ENCODE measurements at regions of chr6 and their contacts with region 1.

Region 1: GRCh38 chr6:16712931-16713484 is 48.3 kb downstream of the ATXN1 start:
- DNase-seq: peak; percentile 45 to 95
- H3K4me3 ChIP-seq: peak overlapping the region; percentile 34; the same call in 1 of the 2 replicates
- H3K27ac ChIP-seq: peak overlapping the region; percentile 95
- H3K4me1 ChIP-seq: peaks cover 33% of the 10 kb centered on the region
- H3K27me3 ChIP-seq: no peaks in the 10 kb centered on the region
- CTCF ChIP-seq: peak; percentile 68

Region 2: GRCh38 chr6:16471222-16471909 is 241.6 kb before region 1 on chr6:
- CTCF ChIA-PET with region 1: no interaction called
- POLR2A ChIA-PET with region 1: no interaction called
- intact Hi-C with region 1: loop called (anchors 1 kb)
- DNase-seq: no peak
- H3K4me3 ChIP-seq: no peak overlapping the region
- H3K27ac ChIP-seq: no peak overlapping the region
- H3K4me1 ChIP-seq: peaks cover 16% of the 10 kb centered on the region; the same call in 1 of the 2 replicates
- H3K27me3 ChIP-seq: no peaks in the 10 kb centered on the region
- CTCF ChIP-seq: no peak

Region 3: DNA sequence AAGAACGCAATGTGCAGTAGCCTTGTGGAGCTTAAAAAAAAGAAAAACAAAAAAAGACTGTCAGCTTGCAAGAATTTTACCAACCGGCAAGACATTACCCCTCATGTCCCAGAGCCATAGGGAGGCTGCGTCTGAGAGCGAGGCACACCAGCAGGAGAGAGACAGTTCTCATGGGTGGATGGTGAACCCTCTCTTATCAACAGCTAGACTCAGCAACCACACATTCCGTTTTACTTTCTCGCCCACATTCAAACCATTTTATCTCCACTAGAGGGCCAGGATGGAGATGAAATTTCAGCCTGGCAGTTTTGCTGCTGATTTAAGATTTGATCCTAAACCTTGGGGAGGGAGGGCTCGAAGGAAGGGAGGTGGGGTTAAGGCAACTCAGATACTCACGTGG is 198.8 kb before region 1 on chr6:
- CTCF ChIA-PET with region 1: interaction called, 3 read pairs
- POLR2A ChIA-PET with region 1: no interaction called
- intact Hi-C with region 1: loop called (anchors 1 kb)
- DNase-seq: no peak
- H3K4me3 ChIP-seq: no peak overlapping the region
- H3K27ac ChIP-seq: no peak overlapping the region
- H3K4me1 ChIP-seq: no peaks in the 10 kb centered on the region
- H3K27me3 ChIP-seq: no peaks in the 10 kb centered on the region
- CTCF ChIP-seq: peak; percentile 53

Region 4: GRCh38 chr6:16670183-16670582 is 42.8 kb before region 1 on chr6:
- CTCF ChIA-PET with region 1: no interaction called
- POLR2A ChIA-PET with region 1: no interaction called
- intact Hi-C with region 1: loop called (anchors 5 kb)
- DNase-seq: peak in 1 of 2 experiments; percentile 45
- H3K4me3 ChIP-seq: no peak overlapping the region
- H3K27ac ChIP-seq: peak overlapping the region; percentile 82
- H3K4me1 ChIP-seq: peaks cover 44% of the 10 kb centered on the region
- H3K27me3 ChIP-seq: no peaks in the 10 kb centered on the region
- CTCF ChIP-seq: no peak

Region 5: GRCh38 chr6:16727996-16728395 is 15.0 kb after region 1 on chr6:
- CTCF ChIA-PET with region 1: no interaction called
- POLR2A ChIA-PET with region 1: no interaction called
- intact Hi-C with region 1: no loop called
- DNase-seq: no peak
- H3K4me3 ChIP-seq: no peak overlapping the region
- H3K27ac ChIP-seq: no peak overlapping the region
- H3K4me1 ChIP-seq: peaks cover 25% of the 10 kb centered on the region
- H3K27me3 ChIP-seq: no peaks in the 10 kb centered on the region
- CTCF ChIP-seq: no peak

Measured in PC-9 (cell line).